CD4-positive, alpha-beta memory T cell (primary cell): ENCODE measurements at regions of chr1 and their contacts with region 1.

Region 1: DNA sequence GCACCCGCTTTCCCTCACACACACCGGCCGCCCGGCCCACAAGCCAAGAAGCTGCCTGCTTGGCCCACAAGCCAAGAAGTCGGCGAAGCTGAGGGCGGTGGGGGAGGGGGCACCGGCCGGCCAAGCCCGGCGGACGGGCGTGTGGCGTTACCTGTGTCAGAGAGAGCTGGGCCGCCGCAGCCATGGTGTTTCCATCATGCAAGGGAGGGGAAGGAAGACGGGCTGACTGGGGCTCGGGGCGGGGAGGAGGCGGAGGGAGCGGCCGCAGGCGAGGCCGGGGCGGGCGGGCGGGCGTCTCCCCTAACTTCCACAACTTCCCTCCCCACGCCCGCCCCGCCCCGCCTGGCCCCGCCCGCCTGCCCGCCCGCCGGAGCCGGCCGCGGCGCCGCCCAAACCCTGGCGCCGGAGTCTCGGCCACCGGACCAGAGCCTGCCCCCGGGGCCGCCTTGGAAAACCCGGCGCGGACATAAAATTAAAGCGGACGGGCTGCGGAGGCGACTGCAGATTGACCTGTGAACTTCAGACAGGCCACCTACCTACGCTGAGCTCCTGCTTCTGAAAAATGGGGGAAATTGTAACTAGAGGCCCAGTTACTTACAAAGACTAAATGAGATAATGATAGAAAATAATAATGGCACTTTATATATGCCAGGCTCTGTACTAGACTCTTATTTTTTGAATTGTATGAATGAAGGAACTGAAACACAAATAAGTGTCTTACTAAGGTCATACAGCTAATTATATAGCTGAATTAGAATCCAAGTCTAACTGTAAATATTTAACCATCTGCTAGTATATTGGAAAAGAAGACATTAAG is at the start of gene EPS15:
- DNase-seq: peak; percentile 79 to 89 (median 83)
- H3K4me3 ChIP-seq: peak within 1 kb of the TSS; percentile 92 to 93
- H3K4me3 Mint-ChIP-seq: peak within 1 kb of the TSS; percentile 90 to 98 (median 97)
- H3K27ac ChIP-seq: peak within 1 kb of the TSS; percentile 69
- H3K27ac Mint-ChIP-seq: peak within 1 kb of the TSS; percentile 90 to 97 (median 95)
- H3K4me1 ChIP-seq: peaks cover 54% of the 10 kb centered on the region
- H3K4me1 Mint-ChIP-seq: peaks cover 44 to 62% (median 51%) of the 10 kb centered on the region in 4 donors
- H3K27me3 ChIP-seq: no peaks in the 10 kb centered on the region
- H3K27me3 Mint-ChIP-seq: no peaks in the 10 kb centered on the region
- total RNA-seq, gene EPS15: 91.5 to 92.3 TPM

Region 2: DNA sequence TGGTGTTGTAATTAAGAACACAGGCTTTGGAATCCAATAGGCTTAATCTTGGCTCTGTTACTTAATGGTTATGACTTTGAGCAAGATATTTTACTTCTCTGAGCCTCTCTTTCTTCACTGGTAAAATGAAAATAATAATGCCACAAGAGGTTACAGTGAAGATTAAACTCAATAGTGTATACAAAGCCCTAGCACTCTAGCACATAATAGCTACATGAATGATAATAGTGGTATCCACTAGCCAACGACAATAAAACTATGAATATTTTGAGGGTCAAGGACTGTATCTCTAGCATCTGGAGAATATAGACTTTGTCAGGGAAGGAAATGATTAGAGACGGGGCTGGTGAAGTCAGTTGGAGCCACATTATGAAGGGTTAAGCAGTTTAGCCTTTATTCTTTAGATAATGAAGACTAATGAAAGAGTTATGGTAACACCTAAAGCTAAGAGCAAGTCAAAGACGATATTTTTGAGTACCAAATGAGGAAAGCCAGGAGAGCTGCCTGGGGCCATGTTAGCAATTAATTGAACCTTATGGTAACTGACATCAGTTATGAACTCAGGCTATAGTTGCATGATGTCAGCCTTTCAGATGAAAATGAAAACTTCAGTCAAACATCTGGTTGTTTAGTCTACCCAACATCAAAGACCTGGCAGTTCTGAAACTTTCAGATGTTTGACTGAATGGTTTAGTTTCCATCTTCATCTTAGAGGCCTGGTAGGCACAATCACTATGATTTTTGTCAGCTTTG is 316.0 kb before region 1 on chr1:
- CTCF ChIA-PET with region 1: no interaction called
- POLR2A ChIA-PET with region 1: no interaction called
- intact Hi-C with region 1: no loop called
- DNase-seq: no peak
- H3K4me3 ChIP-seq: no peak overlapping the region
- H3K4me3 Mint-ChIP-seq: no peak overlapping the region
- H3K27ac ChIP-seq: no peak overlapping the region
- H3K27ac Mint-ChIP-seq: no peak overlapping the region
- H3K4me1 ChIP-seq: no peaks in the 10 kb centered on the region
- H3K4me1 Mint-ChIP-seq: no peaks in the 10 kb centered on the region
- H3K27me3 ChIP-seq: no peaks in the 10 kb centered on the region
- H3K27me3 Mint-ChIP-seq: no peaks in the 10 kb centered on the region

Region 3: GRCh38 chr1:51235673-51236530 is 283.4 kb before region 1 on chr1 and contains the start of gene RNF11:
- CTCF ChIA-PET with region 1: no interaction called
- POLR2A ChIA-PET with region 1: interaction called, 15 read pairs
- intact Hi-C with region 1: loop called (anchors 2 kb)
- DNase-seq: peak; percentile 90 to 94 (median 94)
- H3K4me3 ChIP-seq: peak within 1 kb of the TSS; percentile 91 to 93
- H3K4me3 Mint-ChIP-seq: peak within 1 kb of the TSS; percentile 94 to 99 (median 98)
- H3K27ac ChIP-seq: peak within 1 kb of the TSS; percentile 81
- H3K27ac Mint-ChIP-seq: peak within 1 kb of the TSS; percentile 87 to 100 (median 99)
- H3K4me1 ChIP-seq: peaks cover 52% of the 10 kb centered on the region
- H3K4me1 Mint-ChIP-seq: peaks cover 15 to 40% (median 32%) of the 10 kb centered on the region in 4 donors
- H3K27me3 ChIP-seq: no peaks in the 10 kb centered on the region
- H3K27me3 Mint-ChIP-seq: no peaks in the 10 kb centered on the region
- total RNA-seq, gene RNF11: 40.8 to 43.4 TPM

Region 4: DNA sequence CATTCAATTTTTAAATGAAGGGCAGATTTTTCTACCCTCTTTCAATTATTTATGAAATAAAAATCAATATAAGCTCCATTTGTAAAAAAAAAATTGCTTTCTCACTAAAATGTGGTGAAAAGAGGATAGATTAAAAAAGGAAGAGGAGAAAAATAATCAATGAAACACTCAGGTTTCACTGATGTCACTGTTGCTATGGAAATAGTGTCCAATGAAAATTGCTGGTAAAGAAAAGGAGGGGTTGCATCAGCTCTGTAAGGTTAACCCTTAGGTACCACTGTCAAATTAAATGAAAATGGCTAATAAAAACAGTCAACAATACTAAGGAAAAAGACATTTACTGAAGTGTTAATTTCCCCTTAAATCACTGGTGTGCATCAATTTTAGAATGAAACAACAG is 97.3 kb before region 1 on chr1:
- CTCF ChIA-PET with region 1: no interaction called
- POLR2A ChIA-PET with region 1: interaction called, 4 read pairs
- intact Hi-C with region 1: loop called (anchors 5 kb)
- DNase-seq: peak in 4 of 5 donors; percentile 16 to 40 (median 22)
- H3K4me3 ChIP-seq: no peak overlapping the region
- H3K4me3 Mint-ChIP-seq: no peak overlapping the region
- H3K27ac ChIP-seq: no peak overlapping the region
- H3K27ac Mint-ChIP-seq: no peak overlapping the region
- H3K4me1 ChIP-seq: no peaks in the 10 kb centered on the region
- H3K4me1 Mint-ChIP-seq: peaks cover 5 to 24% (median 14%) of the 10 kb centered on the region in 4 donors
- H3K27me3 ChIP-seq: no peaks in the 10 kb centered on the region
- H3K27me3 Mint-ChIP-seq: no peaks in the 10 kb centered on the region

Region 5: DNA sequence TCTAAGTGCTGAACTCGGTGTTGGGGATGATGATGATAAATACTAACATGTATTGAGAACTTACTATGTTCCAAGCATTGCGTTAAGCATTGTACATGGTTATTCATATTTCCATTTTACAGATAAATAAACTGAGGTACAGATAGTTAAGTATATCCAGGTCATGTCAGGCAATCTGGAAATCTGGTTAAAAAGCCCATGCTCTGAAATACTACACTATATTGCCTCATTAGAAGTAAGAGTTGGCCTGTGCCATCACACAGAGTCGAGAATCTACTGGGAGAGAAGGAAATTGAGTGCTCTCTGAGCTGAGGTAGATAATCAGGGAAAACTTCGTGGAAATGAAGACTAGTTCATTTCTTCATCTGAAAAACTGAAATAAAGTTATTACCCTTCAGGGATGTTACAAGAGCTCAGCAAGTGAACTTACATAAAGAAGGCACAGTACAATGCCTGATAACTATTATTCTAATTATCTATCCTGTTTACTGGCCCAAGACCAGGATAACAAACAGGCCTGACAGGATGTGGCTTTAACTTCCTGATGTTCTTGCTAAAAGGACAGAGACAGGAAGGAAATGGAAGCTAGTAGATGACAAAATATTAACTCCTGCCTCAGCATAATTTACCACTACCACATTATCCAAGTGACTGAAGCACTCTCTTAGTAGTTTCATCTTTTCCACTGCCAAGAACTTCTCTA is 85.8 kb before region 1 on chr1:
- CTCF ChIA-PET with region 1: no interaction called
- POLR2A ChIA-PET with region 1: interaction called, 18 read pairs
- intact Hi-C with region 1: no loop called
- DNase-seq: peak in 3 of 5 donors; percentile 19
- H3K4me3 ChIP-seq: no peak overlapping the region
- H3K4me3 Mint-ChIP-seq: peak overlapping the region; percentile 25 to 84 (median 67)
- H3K27ac ChIP-seq: peak overlapping the region; percentile 13
- H3K27ac Mint-ChIP-seq: peak overlapping the region; percentile 36 to 94 (median 76)
- H3K4me1 ChIP-seq: peaks cover 39% of the 10 kb centered on the region
- H3K4me1 Mint-ChIP-seq: peaks cover 29 to 49% (median 37%) of the 10 kb centered on the region in 4 donors
- H3K27me3 ChIP-seq: no peaks in the 10 kb centered on the region
- H3K27me3 Mint-ChIP-seq: no peaks in the 10 kb centered on the region

Region 6: DNA sequence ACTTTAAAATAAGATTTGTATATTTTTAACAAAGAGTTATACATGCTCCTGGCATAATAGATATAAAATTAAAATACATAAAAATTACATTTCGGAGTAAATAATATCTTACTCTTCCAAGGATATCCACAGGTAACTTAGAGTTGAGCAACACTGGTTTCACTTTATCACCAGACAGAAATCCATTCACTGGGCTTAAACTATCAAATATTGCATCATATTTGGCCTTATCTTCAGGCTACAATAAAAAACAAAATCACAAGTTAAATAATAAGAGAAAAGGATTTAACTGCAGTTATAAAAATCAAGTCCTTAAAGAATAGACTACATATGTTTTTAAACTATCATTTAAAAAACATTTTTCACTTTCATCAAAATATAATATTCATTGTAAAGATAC is 55.7 kb before region 1 on chr1:
- CTCF ChIA-PET with region 1: no interaction called
- POLR2A ChIA-PET with region 1: no interaction called
- intact Hi-C with region 1: no loop called
- DNase-seq: no peak
- H3K4me3 ChIP-seq: no peak overlapping the region
- H3K4me3 Mint-ChIP-seq: no peak overlapping the region
- H3K27ac ChIP-seq: no peak overlapping the region
- H3K27ac Mint-ChIP-seq: no peak overlapping the region
- H3K4me1 ChIP-seq: no peaks in the 10 kb centered on the region
- H3K4me1 Mint-ChIP-seq: peaks cover 0 to 4% (median 4%) of the 10 kb centered on the region in 4 donors
- H3K27me3 ChIP-seq: no peaks in the 10 kb centered on the region
- H3K27me3 Mint-ChIP-seq: no peaks in the 10 kb centered on the region

Region 7: GRCh38 chr1:51506537-51506936 is 12.7 kb before region 1 on chr1:
- CTCF ChIA-PET with region 1: interaction called, 7 read pairs
- POLR2A ChIA-PET with region 1: interaction called, 13 read pairs
- intact Hi-C with region 1: loop called (anchors 2 kb)
- DNase-seq: no peak
- H3K4me3 ChIP-seq: no peak overlapping the region
- H3K4me3 Mint-ChIP-seq: peak overlapping the region in 3 of 8 donors; percentile 25 to 59 (median 34)
- H3K27ac ChIP-seq: no peak overlapping the region
- H3K27ac Mint-ChIP-seq: no peak overlapping the region
- H3K4me1 ChIP-seq: peaks cover 75% of the 10 kb centered on the region
- H3K4me1 Mint-ChIP-seq: peaks cover 39 to 72% (median 52%) of the 10 kb centered on the region in 4 donors
- H3K27me3 ChIP-seq: no peaks in the 10 kb centered on the region
- H3K27me3 Mint-ChIP-seq: no peaks in the 10 kb centered on the region

Region 8: DNA sequence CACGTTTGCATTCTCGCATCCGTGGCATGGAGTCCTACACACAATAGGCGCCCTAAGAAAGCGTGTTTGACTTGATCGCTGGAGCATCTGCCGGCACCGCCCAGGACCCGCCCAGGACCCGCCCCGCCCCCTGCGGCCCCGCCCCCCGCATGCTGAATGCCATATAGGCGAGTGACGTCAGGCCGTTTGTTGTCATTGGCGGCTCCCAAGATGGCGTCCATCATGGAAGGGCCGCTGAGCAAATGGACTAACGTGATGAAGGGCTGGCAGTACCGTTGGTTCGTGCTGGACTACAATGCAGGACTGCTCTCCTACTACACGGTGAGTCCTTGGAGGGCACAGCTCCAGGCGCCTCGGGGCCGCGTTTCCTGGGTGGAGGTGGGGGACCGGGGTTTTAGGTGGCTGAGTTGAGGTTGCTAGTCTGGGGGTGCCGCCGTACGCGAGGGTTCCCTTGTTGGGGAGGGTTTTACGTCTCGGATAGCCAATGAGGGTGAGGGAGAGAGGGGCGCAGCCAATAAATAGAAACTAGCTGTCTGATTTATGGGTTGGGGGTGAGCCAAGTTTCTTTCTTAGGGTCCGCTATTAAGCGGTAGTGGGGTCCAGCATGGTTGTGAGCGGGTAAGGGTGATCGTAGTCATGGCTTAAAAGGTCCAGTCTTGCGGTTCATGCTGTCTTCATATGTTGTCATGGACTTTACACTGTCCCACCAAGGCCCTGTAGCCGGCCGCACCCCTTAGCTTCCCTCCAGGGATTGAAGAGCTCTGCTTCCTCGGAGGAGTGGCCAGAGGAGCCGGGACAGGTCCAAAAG is 97.8 kb after region 1 on chr1 and contains the start of gene OSBPL9:
- CTCF ChIA-PET with region 1: no interaction called
- POLR2A ChIA-PET with region 1: interaction called, 5 read pairs
- intact Hi-C with region 1: loop called (anchors 2 kb)
- DNase-seq: peak; percentile 84 to 91 (median 87)
- H3K4me3 ChIP-seq: peak within 1 kb of the TSS; percentile 76 to 79
- H3K4me3 Mint-ChIP-seq: peak within 1 kb of the TSS; percentile 100
- H3K27ac ChIP-seq: peak within 1 kb of the TSS; percentile 72
- H3K27ac Mint-ChIP-seq: peak within 1 kb of the TSS; percentile 93 to 100 (median 99)
- H3K4me1 ChIP-seq: peaks cover 32% of the 10 kb centered on the region
- H3K4me1 Mint-ChIP-seq: peaks cover 24 to 49% (median 37%) of the 10 kb centered on the region in 4 donors
- H3K27me3 ChIP-seq: no peaks in the 10 kb centered on the region
- H3K27me3 Mint-ChIP-seq: peaks cover under 1 to 1% of the 10 kb centered on the region in 2 donors
- total RNA-seq, gene OSBPL9: 45.1 to 46.9 TPM

Region 9: DNA sequence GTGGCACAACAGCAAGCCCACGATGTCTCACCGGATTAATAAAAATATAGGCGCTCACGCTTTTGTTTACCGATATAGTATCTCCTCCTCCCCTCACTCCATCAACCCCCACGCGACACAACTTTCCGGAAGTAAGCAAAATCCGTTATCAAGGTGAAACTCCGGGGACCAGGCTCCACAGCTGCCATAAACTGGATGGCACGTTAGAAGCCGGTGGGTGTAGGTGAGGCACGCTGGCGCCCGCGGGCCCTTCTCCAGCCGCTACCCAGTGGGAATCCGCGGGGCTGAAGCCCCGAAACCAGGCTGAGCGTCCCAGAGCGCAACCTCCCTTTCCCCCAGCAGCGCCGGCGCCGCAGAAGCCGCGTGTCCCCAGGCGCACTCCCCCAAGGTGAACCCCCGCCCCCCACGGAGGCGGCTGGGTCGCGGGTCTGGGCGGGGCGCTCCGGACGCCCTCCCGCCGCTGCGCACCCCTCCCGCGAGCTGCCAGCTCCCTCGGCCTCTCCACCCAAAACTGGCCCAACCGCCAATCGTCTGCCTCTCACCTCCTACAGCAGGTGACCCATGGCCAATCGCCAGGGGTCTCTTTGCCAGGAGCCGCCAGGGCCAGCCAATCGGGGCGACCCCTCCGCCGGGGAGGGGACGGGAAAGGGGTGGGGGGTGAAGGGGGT is 210.0 kb after region 1 on chr1:
- CTCF ChIA-PET with region 1: no interaction called
- POLR2A ChIA-PET with region 1: interaction called, 8 read pairs
- intact Hi-C with region 1: loop called (anchors 2 kb)
- DNase-seq: peak; percentile 92 to 94 (median 93)
- H3K4me3 ChIP-seq: peak overlapping the region; percentile 89 to 96
- H3K4me3 Mint-ChIP-seq: peak overlapping the region; percentile 94 to 97 (median 94)
- H3K27ac ChIP-seq: peak overlapping the region; percentile 68
- H3K27ac Mint-ChIP-seq: peak overlapping the region; percentile 67 to 96 (median 94)
- H3K4me1 ChIP-seq: peaks cover 37% of the 10 kb centered on the region
- H3K4me1 Mint-ChIP-seq: peaks cover 30 to 54% (median 39%) of the 10 kb centered on the region in 4 donors
- H3K27me3 ChIP-seq: no peaks in the 10 kb centered on the region
- H3K27me3 Mint-ChIP-seq: no peaks in the 10 kb centered on the region